IMR-90 (cell line): ENCODE measurements at regions of chr2 and their contacts with region 1.

Region 1: GRCh38 chr2:86764661-86765307 is 25.9 kb downstream of the CD8A start:
- DNase-seq: peak; percentile 49
- ATAC-seq: peak; percentile 81; the same call in 1 of the 2 replicates
- H3K4me3 ChIP-seq: no peak overlapping the region
- H3K27ac ChIP-seq: no peak overlapping the region
- H3K4me1 ChIP-seq: no peaks in the 10 kb centered on the region
- H3K27me3 ChIP-seq: no peaks in the 10 kb centered on the region
- CTCF ChIP-seq: peak; percentile 59
- POLR2A ChIP-seq: no peak
- RAD21 ChIP-seq: peak; percentile 56

Region 2: DNA sequence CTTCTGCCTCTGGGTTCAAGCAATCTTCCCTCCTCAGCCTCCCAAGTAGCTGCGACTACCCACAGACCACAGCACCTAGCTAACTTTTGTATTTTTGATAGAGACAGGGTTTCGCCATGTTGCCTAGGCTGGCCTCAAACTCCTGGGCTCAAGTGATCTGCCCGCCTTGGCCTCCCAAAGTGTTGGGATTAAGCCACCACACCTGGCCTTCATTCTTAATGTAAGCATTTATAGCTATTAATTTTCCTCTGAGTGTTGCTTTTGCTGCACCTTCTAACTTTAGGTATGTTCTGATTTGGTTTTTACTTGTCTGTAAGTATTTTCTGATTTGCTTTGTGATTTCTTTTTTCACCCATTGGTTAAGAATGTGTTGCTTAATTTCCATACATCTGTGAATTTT is 231.2 kb before region 1 on chr2:
- CTCF ChIA-PET with region 1: no interaction called
- POLR2A ChIA-PET with region 1: no interaction called
- dilution Hi-C with region 1: no loop called
- in situ Hi-C with region 1: no loop called
- intact Hi-C with region 1: no loop called
- DNase-seq: no peak
- ATAC-seq: no peak
- H3K4me3 ChIP-seq: no peak overlapping the region
- H3K27ac ChIP-seq: no peak overlapping the region
- H3K4me1 ChIP-seq: no peaks in the 10 kb centered on the region
- H3K27me3 ChIP-seq: no peaks in the 10 kb centered on the region
- CTCF ChIP-seq: no peak
- POLR2A ChIP-seq: no peak
- RAD21 ChIP-seq: no peak

Region 3: DNA sequence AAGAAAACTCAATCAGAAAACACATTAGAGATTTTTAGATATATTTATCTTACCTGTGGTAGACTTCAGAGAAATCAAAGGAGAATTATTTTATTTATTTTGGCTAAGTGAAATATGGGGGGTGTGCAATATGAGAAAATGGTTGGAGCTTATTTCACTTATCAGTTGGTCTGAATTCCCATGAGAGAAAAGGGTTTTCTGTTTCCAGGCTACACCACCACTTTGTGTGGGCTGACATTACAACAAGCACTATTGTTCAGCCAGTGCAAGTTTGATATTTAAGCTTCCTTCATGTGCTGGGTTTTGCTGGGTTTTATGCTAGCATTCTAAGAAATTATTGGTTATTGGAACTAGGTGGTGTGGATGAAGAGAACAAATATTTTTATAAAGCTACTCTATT is 11.2 kb before region 1 on chr2:
- CTCF ChIA-PET with region 1: interaction called, 14 read pairs
- POLR2A ChIA-PET with region 1: no interaction called
- dilution Hi-C with region 1: no loop called
- in situ Hi-C with region 1: no loop called
- intact Hi-C with region 1: no loop called
- DNase-seq: no peak
- ATAC-seq: no peak
- H3K4me3 ChIP-seq: no peak overlapping the region
- H3K27ac ChIP-seq: no peak overlapping the region
- H3K4me1 ChIP-seq: no peaks in the 10 kb centered on the region
- H3K27me3 ChIP-seq: no peaks in the 10 kb centered on the region
- CTCF ChIP-seq: no peak
- POLR2A ChIP-seq: no peak
- RAD21 ChIP-seq: no peak